ENCODE measurements at regions of chr3 and their contacts with region 1.

Region 1: GRCh38 chr3:133712017-133712416 is 34.2 kb upstream of the TF start:
- DNase-seq: peak in 4 of 10 donors; percentile 10 to 89 (median 44)

Region 2: DNA sequence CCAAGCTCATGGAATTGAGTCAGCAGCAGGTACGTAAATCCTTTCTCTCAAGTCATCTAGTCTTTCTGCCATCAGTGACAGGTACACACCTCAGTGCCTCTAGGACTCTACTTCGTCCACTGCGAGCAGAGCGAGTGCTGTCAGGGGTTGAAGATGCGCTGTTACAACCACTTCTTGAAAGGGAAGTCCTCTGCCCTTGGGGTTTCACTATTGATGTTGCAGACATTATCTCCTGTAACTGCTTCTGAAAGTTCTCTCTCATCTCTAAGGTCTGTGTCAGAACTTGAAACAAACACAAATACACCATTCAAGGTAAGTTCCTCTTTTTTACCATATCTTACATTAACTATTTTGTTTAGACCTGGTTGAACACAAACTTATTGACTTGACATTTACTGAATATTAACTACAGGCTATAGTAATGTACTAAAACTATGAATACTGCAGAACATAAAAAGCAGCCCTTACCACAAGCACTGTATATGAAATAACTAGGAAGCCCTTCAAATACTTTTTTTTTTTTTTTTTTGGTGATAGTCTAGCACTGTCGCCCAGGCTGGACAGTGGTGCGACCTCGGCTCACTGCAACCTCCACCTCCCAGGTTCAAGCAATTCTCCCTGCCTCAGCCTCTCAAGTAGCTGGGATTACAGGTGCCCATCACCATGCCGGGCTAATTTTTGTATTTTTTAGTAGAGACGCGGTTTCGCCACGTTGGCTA is 91.8 kb before region 1 on chr3:
- intact Hi-C with region 1: no loop called
- DNase-seq: no peak

Region 3: GRCh38 chr3:133745981-133746711 is 34.1 kb after region 1 on chr3 and contains the start of gene TF:
- intact Hi-C with region 1: loop called (anchors 5 kb)
- DNase-seq: peak; percentile 73 to 98 (median 90)

Measured in posterior cingulate gyrus (tissue), 11 donors.